Right ventricle myocardium superior (tissue), 1 donor: ENCODE measurements at regions of chr10 and their contacts with region 1.

Region 1: DNA sequence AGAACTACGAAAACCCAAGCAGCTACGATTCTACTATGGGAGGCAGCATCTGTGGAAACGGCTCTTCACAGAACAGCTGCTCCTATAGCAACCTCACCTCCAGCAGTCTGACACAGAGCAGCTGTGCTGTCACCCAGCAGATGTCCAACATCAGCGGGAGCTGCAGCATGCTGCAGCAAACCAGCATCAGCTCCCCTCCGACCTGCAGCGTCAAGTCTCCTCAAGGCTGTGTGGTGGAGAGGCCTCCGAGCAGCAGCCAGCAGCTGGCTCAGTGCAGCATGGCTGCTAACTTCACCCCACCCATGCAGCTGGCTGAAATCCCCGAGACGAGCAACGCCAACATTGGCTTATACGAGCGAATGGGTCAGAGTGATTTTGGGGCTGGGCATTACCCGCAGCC is 81.6 kb upstream of the SAMD8 start:
- DNase-seq: peak; percentile 65
- ATAC-seq: peak; percentile 59

Region 2: DNA sequence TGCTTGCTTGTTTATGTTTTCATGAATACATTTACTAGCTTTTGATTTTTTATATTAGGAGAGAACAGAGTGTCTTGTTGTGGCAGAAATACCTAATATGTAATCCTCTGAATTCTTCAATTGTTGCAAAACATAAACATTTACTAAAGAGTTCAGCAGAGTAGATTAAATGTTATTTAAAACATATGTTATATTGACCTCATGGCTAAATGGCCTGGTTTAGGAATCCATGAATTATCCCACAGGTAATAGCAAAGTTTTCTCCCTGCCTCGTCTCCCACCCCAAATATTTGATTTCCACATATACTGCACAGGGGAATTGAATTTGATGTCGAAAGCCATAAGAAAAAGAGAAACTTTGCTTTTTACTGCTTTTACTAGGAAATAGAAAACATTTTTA is 767.0 kb before region 1 on chr10:
- intact Hi-C with region 1: loop called (anchors 10 kb)
- DNase-seq: no peak
- ATAC-seq: no peak

Region 3: GRCh38 chr10:74932648-74933047 is 97.2 kb before region 1 on chr10:
- intact Hi-C with region 1: no loop called
- DNase-seq: peak; percentile 87
- ATAC-seq: peak; percentile 82

Region 4: GRCh38 chr10:75230600-75231038 is 200.8 kb after region 1 on chr10:
- intact Hi-C with region 1: no loop called
- DNase-seq: peak; percentile 95
- ATAC-seq: no peak